Heart right ventricle (tissue), 16 donors: ENCODE measurements at regions of chr5 and their contacts with region 1.

Region 1: DNA sequence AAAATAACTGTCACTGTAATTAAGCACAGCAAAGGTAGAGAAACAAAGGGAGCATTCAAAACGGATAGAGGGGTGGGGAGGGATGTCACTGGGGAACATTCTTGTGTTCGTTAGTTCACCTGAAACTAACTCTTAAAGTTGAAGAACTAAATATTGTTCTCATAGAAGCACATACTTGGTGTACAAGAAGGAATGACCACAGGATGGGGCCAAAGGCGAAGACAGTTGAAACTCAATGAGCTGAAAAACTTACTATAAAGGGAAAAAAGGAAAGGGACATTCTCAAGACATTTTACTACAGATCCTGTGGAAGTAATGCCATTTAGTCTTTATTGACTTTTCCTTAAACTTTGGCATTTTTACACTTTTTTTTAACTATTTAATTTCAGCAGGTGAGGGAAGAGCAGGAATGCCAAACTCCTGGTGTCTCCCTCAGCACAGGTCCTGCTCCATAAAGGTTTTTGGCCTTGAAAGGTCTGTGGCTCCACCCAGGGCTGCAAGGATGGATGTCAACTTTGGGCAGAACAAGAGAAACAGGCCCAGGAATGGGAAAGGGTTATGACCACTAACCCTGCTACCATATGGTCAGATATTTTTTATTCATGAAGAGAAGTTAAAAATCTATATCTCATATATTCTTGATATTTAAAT is 197.6 kb upstream of the RASA1 start:
- DNase-seq: peak in 1 of 2 donors; percentile 16
- ATAC-seq: peak in 2 of 8 donors; percentile 41 to 59
- H3K4me3 ChIP-seq: no peak overlapping the region
- H3K27ac ChIP-seq: no peak overlapping the region
- H3K4me1 ChIP-seq: peaks cover 0 to 3% (median 0%) of the 10 kb centered on the region in 9 donors
- H3K27me3 ChIP-seq: no peaks in the 10 kb centered on the region
- CTCF ChIP-seq: peak in 8 of 9 donors; percentile 23 to 64 (median 50)

Region 2: DNA sequence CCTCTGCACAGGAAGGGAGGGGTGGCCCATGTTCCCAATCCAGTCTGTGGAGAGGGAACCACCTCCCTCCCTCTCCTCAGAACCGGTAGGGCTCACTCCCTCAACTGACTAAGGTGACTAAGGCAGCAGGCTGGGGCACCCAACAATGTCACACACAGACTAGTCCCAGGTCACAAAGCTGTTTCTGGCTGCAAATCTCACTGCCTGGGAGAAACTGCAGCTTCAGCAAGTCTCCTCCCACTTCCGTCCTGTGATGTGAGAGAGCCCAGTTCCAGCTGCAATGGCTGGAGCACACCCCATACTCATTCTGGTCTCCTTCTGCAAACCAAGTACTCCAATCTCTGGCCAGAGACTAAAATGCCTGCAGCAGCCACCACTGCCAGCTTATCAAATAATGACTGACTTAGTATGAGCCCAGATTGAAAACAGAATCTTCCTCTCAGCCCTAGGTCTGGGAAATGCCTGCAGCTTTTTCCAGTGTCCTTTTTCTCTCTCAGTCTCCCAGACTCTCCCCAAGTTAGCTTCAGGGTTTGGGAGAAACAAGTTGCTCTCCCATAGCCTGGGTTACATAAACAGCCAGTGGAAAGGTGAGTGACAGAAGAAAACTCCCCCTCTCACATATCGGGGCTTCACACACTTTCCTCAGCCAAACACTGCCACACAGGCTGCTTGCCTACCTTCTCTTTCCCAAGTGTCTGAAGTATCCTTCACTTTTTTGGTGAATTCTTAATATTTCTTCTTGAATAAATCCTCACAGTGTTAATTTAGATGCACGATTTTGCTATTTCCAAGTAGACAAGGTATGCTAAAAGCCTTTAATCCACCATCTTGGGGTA is 49.8 kb before region 1 on chr5:
- intact Hi-C with region 1: no loop called
- DNase-seq: peak; percentile 12 to 53
- ATAC-seq: peak; percentile 62 to 89 (median 85)
- H3K4me3 ChIP-seq: peak overlapping the region in 3 of 10 donors; percentile 1 to 17 (median 3)
- H3K27ac ChIP-seq: peak overlapping the region in 6 of 10 donors; percentile 23 to 71 (median 48)
- H3K4me1 ChIP-seq: peaks cover 0 to 28% (median 11%) of the 10 kb centered on the region in 9 donors
- H3K27me3 ChIP-seq: no peaks in the 10 kb centered on the region
- CTCF ChIP-seq: no peak

Region 3: DNA sequence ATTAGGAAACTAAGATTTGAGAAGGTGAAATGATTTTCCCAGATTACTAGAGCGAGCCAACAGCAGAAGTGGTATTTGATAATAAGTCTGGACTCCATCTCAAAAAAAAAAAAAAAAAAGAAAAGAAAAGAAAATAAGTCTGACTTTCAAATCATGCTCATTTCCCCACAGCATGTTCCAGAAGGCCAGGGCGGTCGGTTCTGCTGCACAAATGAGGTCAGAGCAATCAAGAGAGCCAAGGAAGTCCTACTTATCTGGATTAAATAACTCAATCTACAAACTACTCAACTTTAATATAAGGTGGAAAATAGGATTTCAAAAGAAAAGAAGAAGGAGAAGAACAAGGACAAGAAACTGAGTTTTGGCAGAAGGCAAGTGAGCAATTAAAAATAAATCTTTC is 67.2 kb after region 1 on chr5:
- intact Hi-C with region 1: loop called in 1 of 10 experiments (anchors 10 kb)
- DNase-seq: peak; percentile 27 to 51
- ATAC-seq: peak in 7 of 8 donors; percentile 61 to 93 (median 88)
- H3K4me3 ChIP-seq: no peak overlapping the region
- H3K27ac ChIP-seq: peak overlapping the region in 6 of 10 donors; percentile 0 to 76 (median 53)
- H3K4me1 ChIP-seq: peaks cover 0 to 44% (median 25%) of the 10 kb centered on the region in 9 donors
- H3K27me3 ChIP-seq: no peaks in the 10 kb centered on the region
- CTCF ChIP-seq: no peak

Region 4: DNA sequence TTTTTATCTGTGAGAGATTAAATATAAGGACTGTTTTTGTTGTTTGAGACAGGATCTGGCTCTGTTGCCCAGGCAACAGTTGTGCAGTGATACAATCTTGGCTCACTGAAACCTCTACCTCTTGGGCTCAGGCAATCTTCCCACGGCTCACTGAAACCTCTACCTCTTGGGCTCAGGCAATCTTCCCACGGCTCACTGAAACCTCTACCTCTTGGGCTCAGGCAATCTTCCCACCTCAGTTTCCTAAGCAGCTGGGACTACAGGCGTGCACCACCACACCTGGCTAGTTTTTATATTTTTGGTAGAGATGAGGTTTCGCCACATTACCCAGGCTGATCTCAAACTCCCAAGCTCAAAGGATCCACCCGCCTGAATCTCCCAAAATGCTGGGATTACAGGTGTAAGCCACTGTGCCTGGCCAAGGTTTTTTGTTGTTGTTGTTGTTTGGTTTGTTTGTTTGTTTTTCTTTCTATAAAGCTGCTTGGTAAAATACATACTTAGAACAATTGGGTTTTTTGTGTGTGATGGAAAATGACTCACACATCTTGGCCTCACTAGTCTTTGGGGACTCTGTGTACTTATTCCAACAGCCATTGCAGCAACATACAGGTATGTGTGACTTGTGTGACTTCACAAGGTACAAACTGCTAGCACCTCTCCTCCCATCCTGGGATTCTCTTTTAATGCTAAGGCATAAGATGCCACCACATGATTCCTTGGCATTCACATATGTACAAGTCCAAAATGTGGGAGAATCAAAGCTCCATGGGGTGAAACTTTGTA is 161.1 kb after region 1 on chr5:
- intact Hi-C with region 1: loop called in 1 of 10 experiments (anchors 10 kb)
- DNase-seq: no peak
- ATAC-seq: no peak
- H3K4me3 ChIP-seq: no peak overlapping the region
- H3K27ac ChIP-seq: no peak overlapping the region
- H3K4me1 ChIP-seq: no peaks in the 10 kb centered on the region
- H3K27me3 ChIP-seq: no peaks in the 10 kb centered on the region
- CTCF ChIP-seq: no peak

Region 5: GRCh38 chr5:87393331-87393730 is 323.2 kb after region 1 on chr5:
- intact Hi-C with region 1: loop called in 3 of 10 experiments (anchors 10 kb)
- DNase-seq: no peak
- ATAC-seq: no peak
- H3K4me3 ChIP-seq: no peak overlapping the region
- H3K27ac ChIP-seq: no peak overlapping the region
- H3K4me1 ChIP-seq: peaks cover 0 to 25% (median 5%) of the 10 kb centered on the region in 9 donors
- H3K27me3 ChIP-seq: no peaks in the 10 kb centered on the region
- CTCF ChIP-seq: no peak

Region 6: DNA sequence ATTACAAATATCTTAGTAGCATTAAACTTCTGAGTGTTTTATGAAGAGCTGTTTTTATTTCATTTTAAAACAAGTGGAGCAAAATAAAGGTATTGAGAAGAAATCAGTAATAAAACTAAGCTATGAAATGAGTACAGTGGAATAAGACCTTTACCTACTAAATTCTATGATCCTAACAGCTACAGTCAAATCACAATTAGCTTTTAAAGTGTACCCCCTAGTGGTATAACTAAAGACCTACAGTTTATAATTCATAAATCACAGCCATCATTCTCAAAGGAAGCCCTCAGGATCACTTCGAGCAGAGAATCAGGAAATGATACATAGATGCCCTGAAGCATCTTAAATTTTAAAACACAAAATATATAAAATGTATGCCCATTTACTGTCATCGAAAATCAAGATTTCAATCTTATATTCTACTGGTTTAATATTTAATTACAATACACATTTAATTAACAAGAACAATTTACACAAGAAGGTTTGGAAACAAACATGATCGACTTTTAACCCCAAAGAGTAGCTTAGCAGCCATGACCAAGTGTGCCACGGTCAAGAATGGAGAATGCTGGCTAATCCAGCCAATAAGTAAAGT is 330.3 kb after region 1 on chr5:
- intact Hi-C with region 1: loop called in 5 of 10 experiments (anchors 2 to 10 kb)
- DNase-seq: no peak
- ATAC-seq: peak in 5 of 8 donors; percentile 45 to 69 (median 49)
- H3K4me3 ChIP-seq: no peak overlapping the region
- H3K27ac ChIP-seq: peak overlapping the region in 1 of 10 donors; percentile 18
- H3K4me1 ChIP-seq: peaks cover 0 to 26% (median 4%) of the 10 kb centered on the region in 9 donors
- H3K27me3 ChIP-seq: no peaks in the 10 kb centered on the region
- CTCF ChIP-seq: peak; percentile 47 to 79 (median 71)